Activated T-helper 2 cell treated with anti-CD3 and anti-CD28 coated beads, Interferon-gamma antibody, Interleukin-2, Interleukin-4, amounts not matched to agents 10 μg/mL and 5 μg/mL and 100 μg/mL, durations not matched to agents 14 hours and 24 hours and 36 hours (primary cell): ENCODE measurements at regions of chrX and their contacts with region 1.

Region 1: DNA sequence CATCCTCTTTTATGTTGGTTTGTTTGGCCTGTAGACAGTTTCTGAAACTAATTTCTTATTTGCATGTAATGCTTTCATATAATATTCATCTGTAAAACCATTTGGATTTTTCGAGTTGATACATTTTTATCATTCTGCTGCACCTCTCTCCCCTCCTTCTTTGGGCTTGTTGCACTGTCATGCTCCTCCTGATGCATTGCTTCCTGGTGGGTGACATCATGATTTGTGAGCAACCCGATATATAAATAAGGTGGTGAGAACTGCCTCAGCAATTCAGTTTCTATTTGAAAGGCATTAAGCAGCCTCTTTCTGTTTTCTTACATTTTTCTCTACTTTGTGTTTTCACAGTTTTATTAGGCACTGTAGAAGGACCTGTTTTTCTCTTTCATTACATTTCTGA is 515.7 kb downstream of the RPA4 start:
- DNase-seq: no peak
- H3K4me3 Mint-ChIP-seq: peak overlapping the region; percentile 10
- H3K27ac Mint-ChIP-seq: peak overlapping the region; percentile 83
- H3K4me1 Mint-ChIP-seq: peaks cover 59% of the 10 kb centered on the region
- H3K27me3 Mint-ChIP-seq: no peaks in the 10 kb centered on the region

Region 2: GRCh38 chrX:97026406-97026805 is 373.0 kb before region 1 on chrX:
- intact Hi-C with region 1: loop called (anchors 1 kb)
- DNase-seq: no peak
- H3K4me3 Mint-ChIP-seq: no peak overlapping the region
- H3K27ac Mint-ChIP-seq: no peak overlapping the region
- H3K4me1 Mint-ChIP-seq: peaks cover 8% of the 10 kb centered on the region
- H3K27me3 Mint-ChIP-seq: no peaks in the 10 kb centered on the region

Region 3: GRCh38 chrX:97215186-97215585 is 184.2 kb before region 1 on chrX:
- intact Hi-C with region 1: loop called (anchors 2 kb)
- DNase-seq: no peak
- H3K4me3 Mint-ChIP-seq: no peak overlapping the region
- H3K27ac Mint-ChIP-seq: no peak overlapping the region
- H3K4me1 Mint-ChIP-seq: peaks cover 1% of the 10 kb centered on the region
- H3K27me3 Mint-ChIP-seq: no peaks in the 10 kb centered on the region

Region 4: GRCh38 chrX:97494756-97495372 is 95.5 kb after region 1 on chrX:
- intact Hi-C with region 1: loop called (anchors 1 kb)
- DNase-seq: no peak
- H3K4me3 Mint-ChIP-seq: no peak overlapping the region
- H3K27ac Mint-ChIP-seq: no peak overlapping the region
- H3K4me1 Mint-ChIP-seq: peaks cover 7% of the 10 kb centered on the region
- H3K27me3 Mint-ChIP-seq: no peaks in the 10 kb centered on the region

Region 5: DNA sequence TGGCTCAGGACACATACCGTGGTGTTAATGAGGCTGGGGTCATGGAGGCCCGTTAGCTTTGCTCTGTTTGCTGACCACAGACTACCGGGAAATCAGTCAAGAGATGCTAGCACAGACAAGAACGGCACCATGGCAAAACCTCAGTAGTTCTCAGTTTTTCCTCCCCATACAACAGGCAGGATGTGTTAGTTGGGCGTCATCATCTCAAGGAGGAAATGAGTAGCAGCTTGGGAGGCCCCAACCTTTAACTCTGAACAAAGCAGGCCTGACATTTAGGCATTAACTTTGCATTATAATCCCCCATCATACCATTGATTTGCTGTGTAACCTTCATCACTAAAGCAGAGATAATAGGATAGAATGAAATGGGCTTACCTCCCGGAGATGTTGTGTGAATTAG is 198.6 kb after region 1 on chrX:
- intact Hi-C with region 1: loop called (anchors 1 kb)
- DNase-seq: peak; percentile 8
- H3K4me3 Mint-ChIP-seq: no peak overlapping the region
- H3K27ac Mint-ChIP-seq: peak overlapping the region; percentile 90
- H3K4me1 Mint-ChIP-seq: peaks cover 18% of the 10 kb centered on the region
- H3K27me3 Mint-ChIP-seq: no peaks in the 10 kb centered on the region